A673 (cell line): ENCODE measurements at regions of chr12 and their contacts with region 1.

Region 1: DNA sequence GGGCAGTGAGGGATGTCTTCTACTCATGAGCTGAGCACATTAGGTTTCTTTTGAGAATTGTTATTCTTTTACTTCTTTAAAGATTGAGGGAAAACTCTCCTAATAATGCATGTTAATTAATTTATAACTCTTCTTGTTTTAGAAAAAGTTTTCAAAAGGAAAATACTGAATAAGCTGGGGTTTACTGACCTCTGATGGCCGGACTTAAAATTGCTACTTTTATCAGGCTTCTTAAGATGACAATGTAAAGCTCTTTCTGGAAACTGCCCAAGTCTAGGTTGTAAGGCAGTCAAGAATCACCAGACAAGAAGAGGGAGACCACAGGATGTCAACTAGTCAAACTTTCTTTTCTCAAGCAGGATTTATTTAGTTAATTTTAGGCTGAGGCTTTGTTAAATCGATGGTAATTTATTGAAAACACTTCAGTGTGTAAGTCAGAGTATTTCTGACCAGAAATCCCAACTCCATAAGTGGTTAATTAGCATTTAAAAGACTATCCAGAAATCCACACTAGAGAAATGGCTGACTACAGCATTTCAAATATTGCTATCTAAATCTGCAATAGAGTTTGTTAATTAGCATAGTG is 82.1 kb downstream of the AVPR1A start:
- DNase-seq: peak; percentile 73
- H3K4me3 ChIP-seq: no peak overlapping the region
- H3K27ac ChIP-seq: no peak overlapping the region
- H3K4me1 ChIP-seq: peaks cover 12% of the 10 kb centered on the region
- H3K27me3 ChIP-seq: no peaks in the 10 kb centered on the region
- CTCF ChIP-seq: peak; percentile 70

Region 2: GRCh38 chr12:62813031-62813829 is 255.7 kb before region 1 on chr12:
- CTCF ChIA-PET with region 1: interaction called, 4 read pairs
- POLR2A ChIA-PET with region 1: no interaction called
- intact Hi-C with region 1: loop called (anchors 5 kb)
- DNase-seq: peak; percentile 85
- H3K4me3 ChIP-seq: no peak overlapping the region
- H3K27ac ChIP-seq: no peak overlapping the region
- H3K4me1 ChIP-seq: peaks cover 14% of the 10 kb centered on the region
- H3K27me3 ChIP-seq: no peaks in the 10 kb centered on the region
- CTCF ChIP-seq: peak; percentile 89